ENCODE measurements at regions of chr14 and their contacts with region 1.

Region 1: DNA sequence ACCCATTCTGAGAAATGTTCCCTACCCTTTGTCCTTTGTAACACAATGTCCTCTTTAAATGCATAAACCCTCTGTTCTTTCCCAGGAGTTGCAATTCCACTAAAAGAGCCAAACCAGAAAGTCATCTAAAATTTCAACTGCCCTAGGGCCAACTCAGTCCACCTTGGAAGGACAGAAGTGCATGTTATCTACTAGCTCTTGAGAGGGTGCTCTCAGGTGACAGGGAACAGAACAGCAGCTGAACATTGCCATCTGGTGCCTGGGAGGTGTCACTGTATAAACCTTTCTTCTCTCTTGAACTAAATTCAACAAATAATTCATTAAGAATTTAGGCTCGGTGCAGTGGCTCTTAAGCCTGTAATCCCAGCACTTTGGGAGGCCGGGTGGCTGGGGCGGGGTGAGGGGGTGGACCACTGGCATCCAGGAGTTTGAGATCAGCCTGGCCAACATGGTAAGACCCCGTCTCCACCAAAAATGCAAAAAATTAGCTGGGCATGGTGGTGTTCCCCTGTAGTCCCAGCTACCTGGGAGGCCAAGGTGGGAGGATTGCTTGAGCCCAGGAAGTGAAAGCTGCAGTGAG is 10.3 kb upstream of the FERMT2 start:
- DNase-seq: peak; percentile 66 to 70
- H3K4me3 ChIP-seq: no peak overlapping the region
- H3K27ac ChIP-seq: peak overlapping the region in 2 of 3 donors; percentile 62 to 65
- H3K4me1 ChIP-seq: peaks cover 4 to 10% of the 10 kb centered on the region in 2 donors
- H3K27me3 ChIP-seq: no peaks in the 10 kb centered on the region
- CTCF ChIP-seq: peak; percentile 41 to 98 (median 88)
- POLR2A ChIP-seq: no peak

Region 2: DNA sequence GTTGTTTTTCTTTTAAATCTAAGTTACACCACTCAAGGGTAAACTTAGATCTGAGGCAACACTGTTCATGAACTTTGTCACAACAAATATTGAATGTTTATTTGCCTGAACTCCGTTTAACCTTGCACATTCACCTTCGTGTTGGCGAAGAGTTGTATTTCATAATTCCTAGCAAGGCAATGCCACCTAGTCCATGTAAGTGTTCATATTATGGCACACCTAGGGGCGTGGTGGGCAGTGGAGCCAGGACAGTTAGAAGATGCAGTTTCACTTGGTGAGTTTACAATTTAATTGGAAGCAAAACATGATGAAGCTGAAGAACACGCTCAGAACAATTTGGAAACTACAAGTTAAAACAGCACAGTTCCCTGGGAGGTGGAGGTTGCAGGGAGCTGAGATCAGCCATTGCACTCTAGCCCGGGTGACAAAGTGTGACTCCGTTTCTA is 139.3 kb before region 1 on chr14:
- intact Hi-C with region 1: loop called (anchors 2 kb)
- DNase-seq: no peak
- H3K4me3 ChIP-seq: no peak overlapping the region
- H3K27ac ChIP-seq: no peak overlapping the region
- H3K4me1 ChIP-seq: no peaks in the 10 kb centered on the region
- H3K27me3 ChIP-seq: no peaks in the 10 kb centered on the region
- CTCF ChIP-seq: no peak
- POLR2A ChIP-seq: no peak

Region 3: GRCh38 chr14:53152890-53153701 is 191.9 kb after region 1 on chr14 and contains the start of gene DDHD1:
- intact Hi-C with region 1: no loop called
- DNase-seq: peak; percentile 70 to 74
- H3K4me3 ChIP-seq: peak within 1 kb of the TSS; percentile 39 to 82 (median 80)
- H3K27ac ChIP-seq: peak within 1 kb of the TSS; percentile 50 to 82 (median 80)
- H3K4me1 ChIP-seq: peaks cover 0 to 3% of the 10 kb centered on the region in 2 donors
- H3K27me3 ChIP-seq: no peaks in the 10 kb centered on the region
- CTCF ChIP-seq: no peak
- POLR2A ChIP-seq: peak in 1 of 2 donors; percentile 81
- total RNA-seq, gene DDHD1: 17.1 to 34.6 (median 18.5) TPM